B cell (primary cell): ENCODE measurements at regions of chr10 and their contacts with region 1.

Region 1: DNA sequence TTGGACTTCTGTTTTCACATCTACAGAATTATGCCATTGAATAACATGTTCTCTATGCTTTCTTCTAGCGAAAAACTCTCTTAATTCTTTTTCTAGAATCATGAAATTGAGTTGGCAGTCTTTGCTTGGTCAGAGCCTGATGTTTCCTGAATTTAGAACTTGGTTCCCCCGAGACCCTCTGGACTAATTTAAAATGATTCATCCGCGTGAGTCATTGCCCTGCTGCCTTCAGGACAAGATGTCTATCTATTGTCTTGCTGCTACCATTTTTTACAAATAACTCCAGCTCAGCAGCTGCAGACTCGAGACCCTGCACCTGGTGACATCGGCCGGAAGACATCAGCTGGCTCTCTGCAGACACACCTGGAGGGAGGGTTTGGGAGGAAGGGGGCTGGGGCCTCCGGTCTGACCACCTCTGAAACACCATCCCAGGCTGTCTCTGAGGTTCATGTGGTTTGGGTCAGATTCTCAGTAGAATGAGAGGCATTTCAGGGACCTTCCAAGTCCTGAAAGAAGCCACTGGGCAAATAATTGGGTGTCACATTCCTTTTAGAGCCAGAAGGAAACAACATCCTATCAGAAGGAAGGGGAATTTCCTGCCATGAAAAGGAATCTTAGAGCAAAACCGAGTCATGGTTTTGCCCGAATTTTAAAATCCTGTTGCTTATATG is 20.9 kb upstream of the KLF6 start:
- DNase-seq: peak; percentile 59
- ATAC-seq: peak; percentile 54
- H3K4me3 ChIP-seq: peak overlapping the region in 1 of 5 experiments; percentile 16
- H3K4me3 Mint-ChIP-seq: peak overlapping the region; percentile 74
- H3K27ac ChIP-seq: peak overlapping the region; percentile 84 to 85
- H3K27ac Mint-ChIP-seq: peak overlapping the region; percentile 97
- H3K4me1 ChIP-seq: peaks cover 49 to 50% of the 10 kb centered on the region in 2 donors
- H3K4me1 Mint-ChIP-seq: peaks cover 58% of the 10 kb centered on the region
- H3K27me3 ChIP-seq: no peaks in the 10 kb centered on the region
- H3K27me3 Mint-ChIP-seq: no peaks in the 10 kb centered on the region
- CTCF ChIP-seq: no peak

Region 2: GRCh38 chr10:3735175-3735574 is 70.8 kb before region 1 on chr10:
- CTCF ChIA-PET with region 1: no interaction called
- POLR2A ChIA-PET with region 1: no interaction called
- intact Hi-C with region 1: no loop called
- DNase-seq: peak; percentile 27
- ATAC-seq: peak; percentile 56
- H3K4me3 ChIP-seq: no peak overlapping the region
- H3K4me3 Mint-ChIP-seq: no peak overlapping the region
- H3K27ac ChIP-seq: no peak overlapping the region
- H3K27ac Mint-ChIP-seq: peak overlapping the region; percentile 47
- H3K4me1 ChIP-seq: no peaks in the 10 kb centered on the region
- H3K4me1 Mint-ChIP-seq: no peaks in the 10 kb centered on the region
- H3K27me3 ChIP-seq: no peaks in the 10 kb centered on the region
- H3K27me3 Mint-ChIP-seq: no peaks in the 10 kb centered on the region
- CTCF ChIP-seq: peak; percentile 18

Region 3: DNA sequence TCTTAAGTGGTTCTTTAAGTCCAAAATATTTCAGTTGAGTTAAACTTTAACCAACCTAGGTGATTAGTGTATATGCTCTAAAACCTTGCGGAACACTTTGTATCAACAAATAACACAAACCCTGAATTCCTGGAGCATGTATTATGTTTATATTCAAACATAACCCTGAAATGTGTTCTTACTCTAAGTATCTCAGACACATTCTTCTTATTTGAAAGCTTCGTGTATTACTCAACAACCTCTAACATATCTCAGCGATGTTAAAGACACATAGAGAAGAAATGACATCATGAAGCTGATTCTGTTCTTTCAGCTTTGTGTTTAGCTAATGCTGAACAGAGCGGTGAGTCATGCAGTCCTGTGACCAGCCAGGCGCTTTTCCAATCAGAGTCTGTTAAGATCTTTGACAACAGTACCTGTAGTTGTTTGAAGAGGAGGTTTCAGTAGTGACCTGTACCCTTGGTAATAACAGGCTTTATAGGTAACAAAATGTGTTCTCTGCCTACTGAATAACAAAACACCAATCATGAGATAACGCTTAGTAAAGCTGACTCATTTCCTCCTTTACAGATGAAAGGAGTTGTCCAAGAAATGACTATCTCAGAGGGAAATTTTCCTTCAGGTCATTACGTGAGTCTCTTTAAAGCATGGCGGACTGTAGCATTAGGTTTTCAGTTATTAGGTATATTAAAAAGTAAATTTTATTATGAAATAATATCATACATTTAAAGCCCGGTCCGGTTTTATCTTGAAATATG is 46.4 kb after region 1 on chr10:
- CTCF ChIA-PET with region 1: no interaction called
- POLR2A ChIA-PET with region 1: no interaction called
- intact Hi-C with region 1: loop called (anchors 1 kb)
- DNase-seq: peak; percentile 53
- ATAC-seq: peak; percentile 70
- H3K4me3 ChIP-seq: no peak overlapping the region
- H3K4me3 Mint-ChIP-seq: peak overlapping the region; percentile 50
- H3K27ac ChIP-seq: peak overlapping the region; percentile 66 to 74
- H3K27ac Mint-ChIP-seq: peak overlapping the region; percentile 85
- H3K4me1 ChIP-seq: peaks cover 15 to 22% of the 10 kb centered on the region in 2 donors
- H3K4me1 Mint-ChIP-seq: peaks cover 32% of the 10 kb centered on the region
- H3K27me3 ChIP-seq: no peaks in the 10 kb centered on the region
- H3K27me3 Mint-ChIP-seq: no peaks in the 10 kb centered on the region
- CTCF ChIP-seq: no peak

Region 4: DNA sequence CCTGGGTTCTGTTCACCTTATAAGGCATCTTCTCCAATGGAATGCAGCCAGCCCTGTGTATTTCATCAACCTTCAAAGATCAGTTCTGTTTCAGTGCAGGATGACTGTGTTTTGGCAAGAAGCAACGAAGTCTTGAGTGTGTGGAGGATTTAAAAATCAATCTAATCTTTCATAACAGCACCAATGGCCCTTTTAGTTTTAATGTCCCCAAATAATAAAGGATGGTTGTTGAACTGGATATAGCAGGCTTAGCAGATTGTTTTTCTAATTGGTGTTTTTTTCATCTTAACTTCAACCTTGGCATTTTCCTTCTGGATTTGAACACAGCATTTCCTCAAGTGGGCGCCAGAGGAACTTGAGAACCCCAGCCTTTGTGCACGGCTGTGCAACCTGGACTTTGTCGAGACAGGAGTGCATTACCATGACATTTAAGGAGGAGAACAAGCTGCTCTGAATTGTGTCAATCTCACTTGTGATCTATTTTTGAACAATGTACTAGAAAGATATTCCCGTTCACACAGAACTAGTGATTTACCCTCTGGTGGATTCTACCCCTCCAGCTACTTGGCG is 706.8 kb after region 1 on chr10:
- CTCF ChIA-PET with region 1: no interaction called
- POLR2A ChIA-PET with region 1: no interaction called
- intact Hi-C with region 1: loop called (anchors 5 kb)
- DNase-seq: no peak
- ATAC-seq: no peak
- H3K4me3 ChIP-seq: no peak overlapping the region
- H3K4me3 Mint-ChIP-seq: no peak overlapping the region
- H3K27ac ChIP-seq: no peak overlapping the region
- H3K27ac Mint-ChIP-seq: no peak overlapping the region
- H3K4me1 ChIP-seq: peaks cover 25 to 26% of the 10 kb centered on the region in 2 donors
- H3K4me1 Mint-ChIP-seq: peaks cover 29% of the 10 kb centered on the region
- H3K27me3 ChIP-seq: no peaks in the 10 kb centered on the region
- H3K27me3 Mint-ChIP-seq: peaks cover 3% of the 10 kb centered on the region
- CTCF ChIP-seq: no peak